ENCODE measurements at regions of chr6 and their contacts with region 1.

Region 1: GRCh38 chr6:42745707-42746462 is at the start of gene TBCC:
- H3K4me3 ChIP-seq: peak within 1 kb of the TSS; percentile 97
- H3K27ac ChIP-seq: peak within 1 kb of the TSS; percentile 93
- H3K4me1 ChIP-seq: peaks cover 26% of the 10 kb centered on the region
- CTCF ChIP-seq: no peak

Region 2: DNA sequence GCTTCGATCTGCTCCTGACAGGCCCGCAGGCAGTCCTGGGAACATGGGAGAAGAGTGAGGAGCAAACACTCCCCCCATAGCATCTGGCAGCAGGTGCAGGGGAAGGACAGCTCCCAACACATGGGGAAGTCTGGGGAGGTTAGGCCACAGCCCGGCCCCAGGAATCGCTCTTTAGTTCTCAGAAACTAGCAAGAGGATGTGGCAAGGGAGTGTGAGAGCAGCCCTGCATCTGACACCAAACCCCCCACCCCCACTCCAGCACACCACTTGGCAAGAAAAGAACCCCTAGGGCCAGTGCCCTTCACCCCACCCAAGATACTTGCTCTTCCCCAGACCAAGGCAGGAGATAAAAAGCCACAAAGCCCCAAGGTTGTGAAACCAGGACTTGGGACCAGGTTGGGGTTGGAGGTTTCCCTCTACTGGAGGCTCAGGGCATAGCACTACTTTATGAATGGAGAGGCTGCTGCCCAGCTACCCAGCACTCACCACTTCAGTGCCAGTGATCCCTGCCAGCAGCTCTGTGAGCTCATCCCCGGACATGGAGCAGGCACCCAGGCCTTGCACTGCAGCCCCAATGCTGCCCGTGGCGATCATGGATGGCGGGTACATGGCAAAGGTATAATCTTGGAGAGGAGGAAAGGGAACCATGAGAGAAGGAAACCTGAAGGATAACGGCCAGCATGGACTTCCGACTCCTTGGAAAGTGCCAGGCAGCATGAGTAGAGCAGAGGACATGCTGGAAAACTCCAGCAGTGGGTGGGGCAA is 809.6 kb before region 1 on chr6:
- CTCF ChIA-PET with region 1: no interaction called
- POLR2A ChIA-PET with region 1: no interaction called
- H3K4me3 ChIP-seq: no peak overlapping the region
- H3K27ac ChIP-seq: no peak overlapping the region
- H3K4me1 ChIP-seq: peaks cover 20% of the 10 kb centered on the region
- CTCF ChIP-seq: peak; percentile 56; the same call in 1 of the 2 replicates

Region 3: DNA sequence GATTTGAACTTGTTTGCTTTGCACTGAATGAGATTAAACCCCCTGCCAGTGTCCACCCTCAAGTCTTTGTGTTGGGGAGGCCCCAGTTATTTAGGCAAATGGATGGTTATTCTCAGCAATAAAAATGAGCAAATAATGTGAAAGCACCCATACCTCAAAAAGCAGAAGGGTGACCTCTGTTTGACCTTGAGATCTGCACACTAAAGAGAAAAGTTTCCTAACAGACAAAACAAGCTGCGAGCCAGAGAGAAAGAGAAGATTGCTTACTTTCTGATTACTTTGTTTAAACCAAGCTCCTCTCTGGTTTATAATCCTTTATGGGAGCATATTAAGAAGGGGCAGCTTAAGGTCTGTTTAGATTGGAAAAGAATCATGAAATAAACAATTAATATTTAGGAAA is 263.7 kb before region 1 on chr6:
- CTCF ChIA-PET with region 1: interaction called, 3 read pairs
- POLR2A ChIA-PET with region 1: interaction called, 14 read pairs
- H3K4me3 ChIP-seq: no peak overlapping the region
- H3K27ac ChIP-seq: no peak overlapping the region
- H3K4me1 ChIP-seq: no peaks in the 10 kb centered on the region
- CTCF ChIP-seq: no peak

Region 4: GRCh38 chr6:42661540-42662153 is 84.2 kb before region 1 on chr6:
- CTCF ChIA-PET with region 1: interaction called, 11 read pairs
- POLR2A ChIA-PET with region 1: interaction called, 3 read pairs
- H3K4me3 ChIP-seq: no peak overlapping the region
- H3K27ac ChIP-seq: no peak overlapping the region
- H3K4me1 ChIP-seq: no peaks in the 10 kb centered on the region
- CTCF ChIP-seq: peak; percentile 47; the same call in 1 of the 2 replicates

Region 5: DNA sequence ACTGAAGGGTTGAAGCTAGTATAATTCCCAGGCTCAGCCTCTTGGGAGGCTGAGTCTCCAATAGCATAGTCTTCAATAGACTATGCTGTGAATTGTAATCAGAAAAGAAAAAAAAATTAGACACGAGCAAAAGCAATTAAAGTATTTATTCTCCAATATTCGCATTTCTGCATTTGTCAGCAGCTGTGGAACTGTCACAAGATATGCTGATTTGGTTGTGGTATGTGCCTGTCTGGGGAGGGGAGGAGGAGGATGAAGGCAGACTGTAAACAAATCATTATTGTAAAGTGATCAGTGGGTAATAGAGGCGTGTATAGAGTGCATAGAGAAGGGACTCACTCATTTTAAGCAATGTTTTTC is 25.8 kb after region 1 on chr6:
- CTCF ChIA-PET with region 1: no interaction called
- POLR2A ChIA-PET with region 1: interaction called, 13 read pairs
- H3K4me3 ChIP-seq: no peak overlapping the region
- H3K27ac ChIP-seq: no peak overlapping the region
- H3K4me1 ChIP-seq: no peaks in the 10 kb centered on the region
- CTCF ChIP-seq: no peak

Region 6: GRCh38 chr6:42879372-42880239 is 133.7 kb after region 1 on chr6 and contains the start of gene RPL7L1:
- CTCF ChIA-PET with region 1: interaction called, 11 read pairs
- POLR2A ChIA-PET with region 1: interaction called, 54 read pairs
- H3K4me3 ChIP-seq: peak within 1 kb of the TSS; percentile 95
- H3K27ac ChIP-seq: peak within 1 kb of the TSS; percentile 99
- H3K4me1 ChIP-seq: no peaks in the 10 kb centered on the region
- CTCF ChIP-seq: peak; percentile 63

Region 7: GRCh38 chr6:43075670-43076463 is 330.0 kb after region 1 on chr6 and contains the start of gene PTK7:
- CTCF ChIA-PET with region 1: no interaction called
- POLR2A ChIA-PET with region 1: no interaction called
- H3K4me3 ChIP-seq: peak within 1 kb of the TSS; percentile 88
- H3K27ac ChIP-seq: peak within 1 kb of the TSS; percentile 87
- H3K4me1 ChIP-seq: peaks cover 14% of the 10 kb centered on the region
- CTCF ChIP-seq: no peak

Measured in HEK293 (cell line).